CD8-positive, alpha-beta memory T cell (primary cell): ENCODE measurements at regions of chr10 and their contacts with region 1.

Region 1: DNA sequence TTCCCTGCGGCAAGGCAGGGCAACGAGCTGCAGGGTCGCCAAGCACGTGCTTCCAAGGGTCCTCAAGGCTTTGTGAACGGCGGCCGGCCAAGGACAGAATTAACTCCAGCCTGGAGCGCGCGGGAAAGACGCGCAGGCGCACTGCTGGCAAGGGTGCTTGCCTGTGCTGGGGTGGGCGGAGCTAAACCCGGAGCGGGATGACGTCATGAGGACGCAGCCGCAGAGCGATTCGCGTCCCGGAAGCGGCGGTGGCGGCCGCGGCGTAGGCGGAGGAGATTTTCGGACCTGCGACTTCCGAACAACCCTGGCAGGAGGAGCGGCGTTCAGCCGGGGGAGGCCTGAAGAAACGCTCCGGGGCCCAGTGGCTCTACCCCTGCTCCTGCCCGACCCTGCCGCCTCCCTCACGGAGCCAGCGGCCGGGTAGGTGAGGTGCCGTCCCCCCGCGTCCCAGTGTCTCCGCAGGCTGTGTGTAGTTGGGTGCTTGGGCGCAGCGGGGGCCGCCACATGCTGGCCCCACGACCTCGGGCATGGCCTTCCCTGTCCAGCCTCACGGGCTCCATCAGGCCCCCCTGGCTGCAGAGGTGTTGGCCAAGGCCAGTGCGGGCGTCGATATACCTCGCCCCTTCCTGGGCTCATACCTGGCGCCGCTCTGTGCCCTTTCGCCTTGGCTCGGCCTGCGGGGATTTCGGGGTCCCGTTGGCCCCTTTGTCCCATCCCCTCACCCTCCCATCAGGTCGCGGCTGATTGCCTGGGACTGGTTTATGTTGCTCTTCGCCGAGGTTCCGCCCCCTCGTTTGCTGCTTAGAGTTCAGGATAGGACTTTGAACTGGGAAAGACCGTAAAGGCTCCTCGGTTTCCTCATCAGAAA is at the start of gene ZFYVE27:
- DNase-seq: peak; percentile 91 to 97 (median 94)
- H3K4me3 ChIP-seq: peak within 1 kb of the TSS; percentile 96
- H3K4me3 Mint-ChIP-seq: peak within 1 kb of the TSS; percentile 93 to 98 (median 96)
- H3K27ac ChIP-seq: peak within 1 kb of the TSS; percentile 92
- H3K27ac Mint-ChIP-seq: peak within 1 kb of the TSS; percentile 90 to 99 (median 98)
- H3K4me1 ChIP-seq: peaks cover 31% of the 10 kb centered on the region
- H3K4me1 Mint-ChIP-seq: peaks cover 50 to 58% (median 57%) of the 10 kb centered on the region in 3 donors
- H3K27me3 ChIP-seq: no peaks in the 10 kb centered on the region
- H3K27me3 Mint-ChIP-seq: peaks cover 0 to 2% of the 10 kb centered on the region in 2 donors
- total RNA-seq, gene ZFYVE27: 27.4 to 28.6 TPM

Region 2: GRCh38 chr10:96960872-96961271 is 776.3 kb before region 1 on chr10:
- CTCF ChIA-PET with region 1: no interaction called
- POLR2A ChIA-PET with region 1: no interaction called
- DNase-seq: no peak
- H3K4me3 ChIP-seq: no peak overlapping the region
- H3K4me3 Mint-ChIP-seq: no peak overlapping the region
- H3K27ac ChIP-seq: no peak overlapping the region
- H3K27ac Mint-ChIP-seq: peak overlapping the region in 1 of 8 donors; percentile 21
- H3K4me1 ChIP-seq: no peaks in the 10 kb centered on the region
- H3K4me1 Mint-ChIP-seq: peaks cover 2 to 15% (median 7%) of the 10 kb centered on the region in 3 donors
- H3K27me3 ChIP-seq: no peaks in the 10 kb centered on the region
- H3K27me3 Mint-ChIP-seq: no peaks in the 10 kb centered on the region

Region 3: DNA sequence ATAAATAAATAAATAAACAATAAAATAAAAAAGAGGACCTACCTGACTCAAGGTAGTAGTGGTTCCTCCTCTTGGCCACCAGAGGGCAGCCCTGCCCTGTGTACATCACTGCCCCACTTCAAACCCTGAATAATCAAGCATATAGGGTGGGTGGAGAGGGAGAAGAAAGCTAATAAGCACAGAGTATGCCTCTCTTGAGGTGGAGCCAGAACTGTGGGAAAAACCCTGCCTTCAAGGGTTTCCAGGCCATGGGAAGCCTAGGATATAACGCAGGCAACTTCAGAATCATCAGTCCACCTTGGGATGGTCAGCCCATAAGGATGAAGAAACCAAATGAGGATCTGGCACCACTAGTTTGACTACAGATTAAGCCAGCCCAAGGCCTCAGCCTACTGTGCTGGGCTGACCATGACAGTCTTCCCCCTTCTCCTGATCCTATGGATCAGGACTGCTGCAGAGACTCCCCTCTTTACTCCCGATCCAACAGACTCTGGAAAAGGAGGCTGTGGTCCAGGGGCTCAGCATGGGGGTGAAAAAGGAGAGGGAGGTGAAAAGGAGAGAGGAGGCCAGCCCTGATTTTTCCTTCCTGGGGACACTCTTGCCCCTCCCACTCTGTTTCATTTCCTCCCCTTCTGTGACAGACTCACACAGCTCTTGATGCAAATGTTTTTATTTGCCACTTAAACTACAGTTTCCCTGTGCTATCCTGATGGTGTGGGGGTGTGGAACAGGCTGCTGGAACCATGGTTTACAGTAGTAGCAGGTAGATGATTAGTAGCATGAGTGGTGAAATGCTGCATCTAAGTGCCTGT is 60.2 kb before region 1 on chr10:
- CTCF ChIA-PET with region 1: interaction called, 119 read pairs
- POLR2A ChIA-PET with region 1: no interaction called
- DNase-seq: peak; percentile 21 to 62 (median 42)
- H3K4me3 ChIP-seq: no peak overlapping the region
- H3K4me3 Mint-ChIP-seq: no peak overlapping the region
- H3K27ac ChIP-seq: no peak overlapping the region
- H3K27ac Mint-ChIP-seq: peak overlapping the region in 3 of 8 donors; percentile 10 to 72 (median 58)
- H3K4me1 ChIP-seq: no peaks in the 10 kb centered on the region
- H3K4me1 Mint-ChIP-seq: no peaks in the 10 kb centered on the region
- H3K27me3 ChIP-seq: no peaks in the 10 kb centered on the region
- H3K27me3 Mint-ChIP-seq: no peaks in the 10 kb centered on the region

Region 4: DNA sequence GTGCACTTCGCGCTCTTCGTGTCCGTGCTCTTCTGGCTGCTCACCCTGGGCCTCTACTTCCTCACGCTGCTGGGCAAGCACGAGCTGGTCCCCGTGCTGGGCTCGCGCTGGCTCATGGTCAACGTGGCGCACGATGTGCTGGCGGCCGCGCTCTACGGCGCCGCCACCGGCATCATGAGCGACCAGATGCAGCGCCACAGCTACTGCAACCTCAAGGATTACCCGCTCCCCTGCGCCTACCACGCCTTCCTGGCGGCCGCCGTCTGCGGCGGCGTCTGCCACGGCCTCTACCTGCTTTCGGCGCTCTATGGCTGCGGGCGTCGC is 23.1 kb before region 1 on chr10:
- CTCF ChIA-PET with region 1: interaction called, 199 read pairs
- POLR2A ChIA-PET with region 1: interaction called, 10 read pairs
- DNase-seq: peak; percentile 26 to 69 (median 50)
- H3K4me3 ChIP-seq: peak overlapping the region; percentile 59
- H3K4me3 Mint-ChIP-seq: peak overlapping the region; percentile 86 to 100 (median 99)
- H3K27ac ChIP-seq: peak overlapping the region; percentile 9
- H3K27ac Mint-ChIP-seq: peak overlapping the region; percentile 18 to 98 (median 95)
- H3K4me1 ChIP-seq: no peaks in the 10 kb centered on the region
- H3K4me1 Mint-ChIP-seq: peaks cover 9 to 23% (median 9%) of the 10 kb centered on the region in 3 donors
- H3K27me3 ChIP-seq: no peaks in the 10 kb centered on the region
- H3K27me3 Mint-ChIP-seq: peaks cover 18 to 23% of the 10 kb centered on the region in 2 donors

Region 5: GRCh38 chr10:97822261-97822687 is 85.1 kb after region 1 on chr10:
- CTCF ChIA-PET with region 1: no interaction called
- POLR2A ChIA-PET with region 1: no interaction called
- DNase-seq: no peak
- H3K4me3 ChIP-seq: no peak overlapping the region
- H3K4me3 Mint-ChIP-seq: no peak overlapping the region
- H3K27ac ChIP-seq: no peak overlapping the region
- H3K27ac Mint-ChIP-seq: no peak overlapping the region
- H3K4me1 ChIP-seq: no peaks in the 10 kb centered on the region
- H3K4me1 Mint-ChIP-seq: no peaks in the 10 kb centered on the region
- H3K27me3 ChIP-seq: no peaks in the 10 kb centered on the region
- H3K27me3 Mint-ChIP-seq: peaks cover 2 to 11% of the 10 kb centered on the region in 2 donors